ENCODE measurements at regions of chr2 and their contacts with region 1.

Region 1: DNA sequence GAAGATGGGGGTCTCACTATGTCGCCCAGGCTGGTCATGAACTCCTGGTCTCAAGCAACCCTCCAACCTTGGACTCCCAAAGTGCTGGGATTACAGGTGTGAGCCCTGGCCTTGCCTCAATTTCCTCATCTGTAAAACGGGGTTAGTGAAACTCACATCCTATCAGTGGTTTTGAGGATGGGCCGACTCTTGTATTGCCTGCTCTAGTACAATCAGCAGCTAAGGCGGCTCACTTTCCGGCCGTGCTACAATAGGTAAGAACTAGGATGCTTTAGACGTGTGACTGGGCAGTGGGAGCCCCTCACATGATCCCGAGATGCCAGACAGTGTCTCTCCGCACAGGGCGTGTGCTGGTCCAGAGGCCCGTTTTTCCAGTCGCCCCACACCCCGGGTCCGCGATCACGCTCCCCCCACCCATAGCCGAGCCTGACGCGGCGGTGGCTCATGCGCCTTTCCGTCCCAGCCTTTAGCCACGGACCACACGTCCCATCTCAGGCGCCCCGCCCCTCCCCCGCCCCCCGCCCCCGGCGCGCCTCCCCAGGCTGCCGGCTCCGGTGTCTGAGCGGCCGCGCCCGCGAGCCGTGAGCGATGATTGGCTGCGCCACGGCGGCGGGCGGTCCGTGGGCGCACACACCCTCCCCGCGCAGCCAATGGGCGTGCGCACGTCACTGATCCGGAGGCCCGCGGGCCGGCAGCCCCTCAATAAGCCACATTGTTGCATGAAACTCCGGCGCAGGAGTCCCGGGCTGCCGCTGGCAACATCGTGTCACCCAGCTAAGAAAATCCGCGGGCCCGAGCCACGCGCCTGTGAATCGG is at the start of gene HK2:
- DNase-seq: peak; percentile 90
- ATAC-seq: peak; percentile 90
- H3K4me3 Mint-ChIP-seq: peak within 1 kb of the TSS; percentile 95
- H3K27ac Mint-ChIP-seq: peak within 1 kb of the TSS; percentile 93
- H3K4me1 Mint-ChIP-seq: peaks cover 42% of the 10 kb centered on the region
- H3K27me3 Mint-ChIP-seq: peaks cover 3% of the 10 kb centered on the region
- CTCF ChIP-seq: no peak
- total RNA-seq, gene HK2: 121 to 124 TPM

Region 2: GRCh38 chr2:74374509-74375205 is 459.0 kb before region 1 on chr2:
- CTCF ChIA-PET with region 1: no interaction called
- POLR2A ChIA-PET with region 1: no interaction called
- intact Hi-C with region 1: no loop called
- DNase-seq: no peak
- ATAC-seq: no peak
- H3K4me3 Mint-ChIP-seq: no peak overlapping the region
- H3K27ac Mint-ChIP-seq: no peak overlapping the region
- H3K4me1 Mint-ChIP-seq: peaks cover 5% of the 10 kb centered on the region
- H3K27me3 Mint-ChIP-seq: no peaks in the 10 kb centered on the region
- CTCF ChIP-seq: no peak

Region 3: DNA sequence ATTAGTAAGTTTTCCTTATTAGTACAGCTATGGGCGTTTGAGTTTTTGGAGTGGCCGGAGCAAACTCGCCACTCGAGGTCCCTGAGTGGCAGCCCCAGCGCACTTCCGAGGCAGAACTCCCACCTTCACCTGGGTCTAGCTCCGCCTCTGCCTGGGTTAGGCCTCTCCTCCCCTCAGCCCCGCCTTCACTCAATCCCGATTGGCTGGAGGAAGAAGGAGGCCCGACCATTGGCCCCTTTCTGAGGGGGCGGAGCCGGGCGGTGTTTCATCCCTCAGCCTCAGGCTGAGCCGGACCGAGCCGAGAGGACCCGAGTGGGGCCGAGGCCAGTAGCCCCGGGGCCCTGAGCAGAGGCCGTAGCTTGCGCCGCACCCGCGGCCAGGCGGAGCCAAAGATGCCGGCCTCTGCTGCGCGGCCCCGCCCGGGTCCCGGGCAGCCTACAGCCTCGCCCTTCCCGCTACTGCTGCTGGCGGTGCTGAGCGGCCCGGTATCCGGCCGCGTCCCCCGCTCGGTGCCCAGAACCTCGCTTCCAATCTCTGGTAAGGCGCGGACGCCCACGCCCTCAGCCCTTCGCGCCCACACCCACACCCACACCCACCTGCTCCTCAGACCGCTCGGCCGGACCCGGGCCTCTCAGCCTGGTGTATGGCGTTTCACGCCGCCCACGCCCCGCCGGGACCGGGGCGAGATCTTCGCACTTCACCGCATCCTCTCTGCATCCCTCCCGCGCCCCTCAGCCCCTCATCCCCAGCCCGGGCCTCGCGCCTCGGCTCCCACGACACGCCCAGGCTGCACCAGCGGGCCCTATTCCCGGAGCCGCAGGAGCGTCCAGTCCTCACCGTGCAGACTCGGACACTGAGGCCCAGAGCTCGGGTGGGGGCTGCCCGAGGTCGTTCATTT is 179.4 kb before region 1 on chr2 and contains the start of gene SEMA4F:
- CTCF ChIA-PET with region 1: no interaction called
- POLR2A ChIA-PET with region 1: no interaction called
- intact Hi-C with region 1: no loop called
- DNase-seq: peak; percentile 96
- ATAC-seq: peak; percentile 100
- H3K4me3 Mint-ChIP-seq: peak within 1 kb of the TSS; percentile 65
- H3K27ac Mint-ChIP-seq: peak within 1 kb of the TSS; percentile 17
- H3K4me1 Mint-ChIP-seq: peaks cover 11% of the 10 kb centered on the region
- H3K27me3 Mint-ChIP-seq: peaks cover 5% of the 10 kb centered on the region
- CTCF ChIP-seq: no peak
- total RNA-seq, gene SEMA4F: 3.1 to 4.2 TPM

Region 4: DNA sequence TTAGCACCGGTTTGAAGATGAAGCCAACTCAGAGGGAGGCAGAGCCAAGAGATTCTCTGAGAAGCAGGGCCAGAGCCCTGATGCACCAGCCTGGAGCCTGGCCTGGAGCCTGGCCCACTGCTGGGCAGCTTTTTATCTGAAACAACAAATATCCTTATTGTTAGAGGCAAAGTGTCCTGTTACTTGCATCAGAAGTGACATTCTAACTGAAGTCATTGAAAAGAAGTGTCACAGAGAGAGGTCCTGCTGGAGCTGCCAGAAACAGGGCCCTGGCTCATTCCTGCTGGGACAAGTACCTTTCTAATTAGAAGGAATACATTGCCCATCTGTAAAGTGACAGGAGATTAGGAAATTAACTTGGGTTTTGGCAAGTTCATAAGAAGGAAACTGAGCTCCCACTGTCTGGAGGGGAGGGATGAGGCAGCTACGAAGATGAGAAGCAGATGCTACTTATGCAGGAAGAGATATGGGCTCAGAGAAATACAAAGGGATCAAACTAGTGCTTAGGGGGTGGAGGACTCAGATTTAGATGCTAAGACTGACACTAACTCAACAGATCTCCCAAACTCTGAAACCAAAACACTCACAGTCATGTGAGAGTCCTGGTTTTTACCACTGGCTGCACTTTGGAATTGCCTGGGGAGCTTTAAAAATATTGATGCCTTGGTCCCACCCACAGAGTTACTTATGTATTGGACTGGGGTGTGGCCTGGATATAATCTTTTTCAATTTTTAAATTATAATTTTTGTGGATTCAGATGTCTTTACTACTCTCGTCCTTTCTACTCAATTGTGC is 10.7 kb before region 1 on chr2:
- CTCF ChIA-PET with region 1: interaction called, 11 read pairs
- POLR2A ChIA-PET with region 1: interaction called, 9 read pairs
- intact Hi-C with region 1: no loop called
- DNase-seq: no peak
- ATAC-seq: no peak
- H3K4me3 Mint-ChIP-seq: no peak overlapping the region
- H3K27ac Mint-ChIP-seq: no peak overlapping the region
- H3K4me1 Mint-ChIP-seq: no peaks in the 10 kb centered on the region
- H3K27me3 Mint-ChIP-seq: no peaks in the 10 kb centered on the region
- CTCF ChIP-seq: no peak

Region 5: DNA sequence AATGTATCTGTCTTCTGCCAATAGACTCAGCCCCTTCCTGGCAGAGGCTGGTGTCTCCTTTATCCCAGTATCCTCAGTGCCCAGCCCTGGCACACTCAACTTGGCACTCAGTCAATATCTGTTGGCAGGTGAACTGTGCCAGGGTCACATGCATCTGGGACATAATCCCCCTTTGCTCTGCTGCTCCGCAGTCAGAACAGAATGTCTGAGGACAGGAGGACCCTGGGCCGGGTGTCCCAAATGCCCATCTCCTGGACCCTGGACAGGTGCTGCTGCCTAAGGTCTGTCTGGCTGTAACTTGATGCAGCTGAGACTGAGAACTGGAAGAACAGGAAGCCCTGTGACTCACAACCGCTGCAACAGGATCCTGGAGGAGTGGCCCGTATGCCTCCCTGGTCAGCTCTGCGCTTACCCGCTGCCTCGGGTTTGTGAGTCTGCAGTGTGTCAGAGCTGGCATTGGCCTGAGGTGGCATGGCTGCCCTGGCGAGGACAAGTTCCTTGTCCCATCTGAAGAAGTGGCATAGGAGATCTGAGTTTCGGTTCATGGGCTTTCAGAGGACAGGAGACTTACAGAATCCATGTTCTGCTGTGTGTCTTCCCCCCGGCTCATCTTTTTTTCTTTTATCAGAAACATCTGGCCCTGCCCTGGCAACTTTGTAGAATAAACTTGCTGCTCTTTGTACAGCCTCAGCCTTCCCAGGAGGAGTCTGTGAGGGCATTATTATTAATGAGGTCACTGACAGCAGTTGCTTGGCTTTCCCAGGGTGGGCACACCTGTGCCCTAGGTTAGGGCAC is 11.8 kb after region 1 on chr2:
- CTCF ChIA-PET with region 1: interaction called, 35 read pairs
- POLR2A ChIA-PET with region 1: interaction called, 11 read pairs
- intact Hi-C with region 1: no loop called
- DNase-seq: peak; percentile 19
- ATAC-seq: no peak
- H3K4me3 Mint-ChIP-seq: no peak overlapping the region
- H3K27ac Mint-ChIP-seq: no peak overlapping the region
- H3K4me1 Mint-ChIP-seq: peaks cover 93% of the 10 kb centered on the region
- H3K27me3 Mint-ChIP-seq: no peaks in the 10 kb centered on the region
- CTCF ChIP-seq: no peak

Region 6: GRCh38 chr2:74876081-74876886 is 42.7 kb after region 1 on chr2:
- CTCF ChIA-PET with region 1: interaction called, 27 read pairs
- POLR2A ChIA-PET with region 1: interaction called, 3 read pairs
- intact Hi-C with region 1: no loop called
- DNase-seq: peak; percentile 54
- ATAC-seq: peak; percentile 67
- H3K4me3 Mint-ChIP-seq: no peak overlapping the region
- H3K27ac Mint-ChIP-seq: no peak overlapping the region
- H3K4me1 Mint-ChIP-seq: no peaks in the 10 kb centered on the region
- H3K27me3 Mint-ChIP-seq: no peaks in the 10 kb centered on the region
- CTCF ChIP-seq: peak; percentile 63